B cell (primary cell): ENCODE measurements at regions of chr10 and their contacts with region 1.

Region 1: DNA sequence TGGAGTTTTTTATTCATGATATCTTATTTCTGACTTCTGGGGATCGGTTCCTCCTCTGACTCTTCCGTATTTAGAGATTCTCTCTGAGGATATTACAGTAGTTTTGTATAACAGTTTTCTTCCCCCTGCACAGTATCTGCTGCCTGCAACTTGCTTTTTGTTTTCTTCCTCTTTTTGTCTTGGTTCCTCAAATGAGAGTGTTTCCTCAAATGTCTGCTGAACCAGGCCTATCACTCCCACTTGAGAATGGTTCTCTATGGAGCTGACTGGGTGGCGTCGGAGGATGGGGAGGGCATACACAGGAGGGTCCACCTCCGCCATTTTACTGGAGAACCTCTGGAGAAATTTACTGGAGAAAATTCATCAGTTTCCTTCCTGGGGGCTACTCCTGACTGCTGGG is 27.7 kb downstream of the ARHGAP22 start:
- DNase-seq: peak; percentile 82
- ATAC-seq: peak; percentile 69
- H3K4me3 ChIP-seq: no peak overlapping the region
- H3K4me3 Mint-ChIP-seq: peak overlapping the region; percentile 58
- H3K27ac ChIP-seq: peak overlapping the region; percentile 91 to 94
- H3K27ac Mint-ChIP-seq: peak overlapping the region; percentile 85
- H3K4me1 ChIP-seq: peaks cover 73 to 85% of the 10 kb centered on the region in 2 donors
- H3K4me1 Mint-ChIP-seq: peaks cover 93% of the 10 kb centered on the region
- H3K27me3 ChIP-seq: no peaks in the 10 kb centered on the region
- H3K27me3 Mint-ChIP-seq: no peaks in the 10 kb centered on the region
- CTCF ChIP-seq: no peak

Region 2: GRCh38 chr10:48551861-48552591 is 25.1 kb before region 1 on chr10:
- CTCF ChIA-PET with region 1: interaction called, 35 read pairs
- POLR2A ChIA-PET with region 1: no interaction called
- intact Hi-C with region 1: loop called (anchors 2 kb)
- DNase-seq: peak; percentile 79
- ATAC-seq: peak; percentile 82
- H3K4me3 ChIP-seq: no peak overlapping the region
- H3K4me3 Mint-ChIP-seq: no peak overlapping the region
- H3K27ac ChIP-seq: no peak overlapping the region
- H3K27ac Mint-ChIP-seq: no peak overlapping the region
- H3K4me1 ChIP-seq: peaks cover 10 to 13% of the 10 kb centered on the region in 2 donors
- H3K4me1 Mint-ChIP-seq: peaks cover 14% of the 10 kb centered on the region
- H3K27me3 ChIP-seq: peaks cover 0 to 6% (median 0%) of the 10 kb centered on the region in 4 experiments
- H3K27me3 Mint-ChIP-seq: peaks cover 7% of the 10 kb centered on the region
- CTCF ChIP-seq: peak; percentile 94